ENCODE measurements at regions of chr19 and their contacts with region 1.

Region 1: GRCh38 chr19:49148784-49149651 is 6.2 kb downstream of the HRC start:
- DNase-seq: peak; percentile 94 to 97 (median 96)
- ATAC-seq: peak; percentile 89
- H3K4me3 ChIP-seq: peak overlapping the region; percentile 61 to 64
- H3K27ac ChIP-seq: peak overlapping the region; percentile 70 to 73
- H3K4me1 ChIP-seq: peaks cover 12 to 49% of the 10 kb centered on the region in 2 donors
- H3K27me3 ChIP-seq: peaks cover 0 to 61% of the 10 kb centered on the region in 2 donors
- CTCF ChIP-seq: no peak

Region 2: GRCh38 chr19:48965040-48965805 is 183.8 kb before region 1 on chr19 and contains the start of gene FTL:
- intact Hi-C with region 1: no loop called
- DNase-seq: peak; percentile 95 to 99 (median 99)
- ATAC-seq: peak; percentile 79
- H3K4me3 ChIP-seq: peak within 1 kb of the TSS; percentile 90 to 92
- H3K27ac ChIP-seq: peak within 1 kb of the TSS; percentile 96 to 97
- H3K4me1 ChIP-seq: peaks cover 13 to 78% of the 10 kb centered on the region in 2 donors
- H3K27me3 ChIP-seq: no peaks in the 10 kb centered on the region
- CTCF ChIP-seq: no peak
- polyA plus RNA-seq, gene FTL: 1,119 to 1,450 (median 1,279) TPM

Region 3: GRCh38 chr19:49097455-49098288 is 51.3 kb before region 1 on chr19:
- intact Hi-C with region 1: loop called in 1 of 2 experiments (anchors 5 kb)
- DNase-seq: peak in 3 of 4 donors; percentile 51 to 75 (median 65)
- ATAC-seq: peak; percentile 96
- H3K4me3 ChIP-seq: no peak overlapping the region
- H3K27ac ChIP-seq: no peak overlapping the region
- H3K4me1 ChIP-seq: peaks cover 0 to 5% of the 10 kb centered on the region in 2 donors
- H3K27me3 ChIP-seq: no peaks in the 10 kb centered on the region
- CTCF ChIP-seq: peak; percentile 98

Region 4: GRCh38 chr19:49224856-49225255 is 75.8 kb after region 1 on chr19:
- intact Hi-C with region 1: no loop called
- DNase-seq: peak in 2 of 4 donors; percentile 39 to 50
- ATAC-seq: peak; percentile 92
- H3K4me3 ChIP-seq: no peak overlapping the region
- H3K27ac ChIP-seq: no peak overlapping the region
- H3K4me1 ChIP-seq: no peaks in the 10 kb centered on the region
- H3K27me3 ChIP-seq: peaks cover 0 to 10% of the 10 kb centered on the region in 2 donors
- CTCF ChIP-seq: peak in 1 of 2 donors; percentile 23